ENCODE measurements at regions of chr1 and their contacts with region 1.

Region 1: DNA sequence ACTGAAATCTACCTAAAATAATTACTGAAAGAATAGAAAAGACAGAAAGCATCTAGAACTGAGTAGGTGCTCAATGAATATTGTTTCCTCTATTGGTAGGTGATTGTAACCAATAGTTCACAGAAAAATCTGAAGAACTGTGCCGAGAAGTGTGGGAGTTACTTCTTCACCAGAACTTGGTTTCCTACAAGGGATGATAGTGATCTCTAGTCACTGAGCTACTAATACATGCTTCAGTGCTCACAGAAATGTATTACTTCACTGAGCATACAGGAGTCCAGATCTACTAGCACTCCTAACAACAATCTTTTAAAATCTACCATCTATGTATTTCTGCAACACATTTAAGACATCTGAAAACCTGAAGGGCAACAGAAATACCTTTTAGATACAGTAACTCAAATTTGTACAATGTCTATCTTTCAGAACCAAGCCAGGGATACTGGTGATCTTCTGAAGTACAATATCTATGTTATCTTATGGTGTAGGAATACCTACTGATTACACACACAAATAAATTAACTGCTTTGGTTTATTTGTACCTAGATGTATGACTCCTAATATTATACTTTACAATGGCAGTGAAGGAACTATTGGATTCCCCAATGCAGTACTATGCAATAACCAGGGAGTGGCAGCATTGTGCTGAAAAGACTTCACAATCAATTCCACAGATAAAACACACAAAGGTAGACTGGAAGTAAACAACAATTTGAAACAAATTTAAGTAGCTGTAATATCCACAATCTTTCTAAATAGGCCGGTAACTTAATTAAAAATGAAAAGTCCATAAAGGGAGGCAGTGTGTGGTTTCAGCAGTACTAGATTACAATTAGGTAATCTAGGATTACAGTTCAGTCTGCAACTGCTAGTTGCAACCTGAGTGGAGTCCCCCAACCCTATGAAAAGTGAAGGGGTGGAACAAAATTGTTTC is 243.0 kb downstream of the SLC45A1 start:
- DNase-seq: peak; percentile 64
- H3K4me3 ChIP-seq: no peak overlapping the region
- H3K27ac ChIP-seq: no peak overlapping the region
- H3K4me1 ChIP-seq: peaks cover 2% of the 10 kb centered on the region
- H3K27me3 ChIP-seq: no peaks in the 10 kb centered on the region
- CTCF ChIP-seq: peak; percentile 58 to 66
- POLR2A ChIP-seq: no peak

Region 2: DNA sequence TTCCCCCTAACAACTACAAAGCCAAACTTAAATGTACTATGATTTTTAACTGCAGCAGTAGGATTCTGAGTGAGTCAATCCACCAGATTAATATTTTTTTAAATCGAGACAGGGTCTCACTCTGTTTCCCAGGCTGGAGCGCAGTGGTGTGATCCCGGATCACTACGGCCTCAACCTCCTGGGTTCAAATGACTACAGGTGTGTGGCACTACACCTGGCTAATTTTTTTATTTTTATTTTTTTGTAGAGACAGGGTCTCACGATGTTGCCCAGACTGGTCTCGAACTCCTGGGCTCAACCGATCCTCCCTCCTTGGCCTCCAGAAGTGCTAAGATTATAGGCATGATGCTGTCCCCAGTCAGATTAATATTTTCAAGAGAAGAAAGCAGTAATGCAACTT is 154.9 kb before region 1 on chr1:
- CTCF ChIA-PET with region 1: no interaction called
- POLR2A ChIA-PET with region 1: no interaction called
- dilution Hi-C with region 1: no loop called
- intact Hi-C with region 1: no loop called
- DNase-seq: no peak
- H3K4me3 ChIP-seq: no peak overlapping the region
- H3K27ac ChIP-seq: no peak overlapping the region
- H3K4me1 ChIP-seq: peaks cover 28% of the 10 kb centered on the region
- H3K27me3 ChIP-seq: no peaks in the 10 kb centered on the region
- CTCF ChIP-seq: no peak
- POLR2A ChIP-seq: no peak

Region 3: DNA sequence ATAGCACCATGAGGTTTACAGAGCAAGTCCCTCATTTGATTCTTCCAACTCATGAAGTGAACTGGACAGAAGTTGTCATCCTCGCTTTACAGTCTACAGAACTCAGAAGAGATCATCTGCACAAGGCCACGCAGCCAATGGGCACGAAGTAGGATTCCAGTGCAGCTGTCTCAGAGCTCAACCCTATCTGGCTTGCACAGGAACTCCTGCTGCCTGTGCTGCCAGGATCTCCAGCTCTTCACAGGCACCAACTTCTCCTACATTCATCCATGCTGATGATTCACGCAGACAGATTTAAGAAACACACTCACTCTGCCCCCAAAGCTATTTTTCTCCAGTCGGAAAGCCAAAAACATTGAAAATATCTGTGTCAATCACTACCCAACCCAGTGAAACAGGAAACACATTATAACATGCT is 99.5 kb after region 1 on chr1:
- CTCF ChIA-PET with region 1: interaction called, 15 read pairs
- POLR2A ChIA-PET with region 1: no interaction called
- dilution Hi-C with region 1: no loop called
- intact Hi-C with region 1: no loop called
- DNase-seq: peak; percentile 92
- H3K4me3 ChIP-seq: no peak overlapping the region
- H3K27ac ChIP-seq: peak overlapping the region; percentile 70
- H3K4me1 ChIP-seq: peaks cover 34% of the 10 kb centered on the region
- H3K27me3 ChIP-seq: no peaks in the 10 kb centered on the region
- CTCF ChIP-seq: no peak
- POLR2A ChIP-seq: no peak

Region 4: DNA sequence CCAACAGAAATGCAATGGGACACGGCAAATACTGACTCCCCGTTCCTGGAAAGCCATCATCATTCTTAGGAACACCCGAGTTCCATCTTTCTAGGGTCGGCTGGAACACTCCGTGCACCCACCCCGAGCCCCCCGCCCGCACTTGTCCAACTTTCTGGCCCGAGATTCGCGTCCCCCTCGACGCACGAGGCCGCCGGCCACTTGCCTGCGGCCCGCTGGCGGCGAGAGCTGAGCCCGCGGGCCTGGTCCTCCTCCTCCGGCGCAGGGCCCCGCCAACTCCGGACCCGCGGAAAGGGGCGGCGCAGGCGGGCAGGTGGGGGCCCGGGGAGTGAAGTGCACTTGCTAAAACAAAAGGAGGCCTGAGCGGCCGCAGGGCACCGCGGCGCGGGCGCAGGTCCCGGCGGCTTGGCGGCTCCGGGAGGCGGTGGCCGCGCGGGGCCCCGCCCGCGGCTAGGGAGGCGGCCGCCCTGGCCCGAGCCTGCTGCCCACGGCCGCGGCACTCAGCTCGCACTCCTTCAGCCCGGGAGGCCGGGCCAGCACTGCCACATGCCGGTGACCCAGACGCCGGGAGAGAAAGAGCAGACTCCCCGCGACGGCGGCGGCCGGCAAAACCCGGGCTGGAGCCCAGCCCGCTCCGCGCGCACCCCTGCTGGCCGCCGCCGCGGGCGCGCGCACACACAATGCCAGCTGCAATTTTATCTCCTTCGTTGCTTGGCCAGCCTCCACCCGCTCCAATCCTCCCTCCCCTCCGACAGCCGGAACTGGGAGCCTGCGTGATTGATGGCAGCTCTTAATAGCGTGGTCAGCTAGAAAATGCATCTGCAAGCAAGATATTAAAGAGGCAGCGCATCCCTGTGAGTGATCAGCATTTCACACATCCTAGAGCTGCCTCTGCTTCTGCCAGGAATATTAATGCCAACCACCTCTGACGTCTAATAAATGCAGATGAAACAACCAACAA is 142.3 kb after region 1 on chr1:
- CTCF ChIA-PET with region 1: interaction called, 12 read pairs
- POLR2A ChIA-PET with region 1: no interaction called
- dilution Hi-C with region 1: no loop called
- intact Hi-C with region 1: no loop called
- DNase-seq: peak; percentile 96
- H3K4me3 ChIP-seq: peak overlapping the region; percentile 61 to 94 (median 80)
- H3K27ac ChIP-seq: peak overlapping the region; percentile 77
- H3K4me1 ChIP-seq: peaks cover 17% of the 10 kb centered on the region
- H3K27me3 ChIP-seq: no peaks in the 10 kb centered on the region
- CTCF ChIP-seq: peak in 1 of 2 donors; percentile 20
- POLR2A ChIP-seq: peak; percentile 95

Region 5: GRCh38 chr1:8718850-8719361 is 158.0 kb after region 1 on chr1:
- CTCF ChIA-PET with region 1: interaction called, 14 read pairs
- POLR2A ChIA-PET with region 1: no interaction called
- dilution Hi-C with region 1: no loop called
- intact Hi-C with region 1: no loop called
- DNase-seq: peak; percentile 16
- H3K4me3 ChIP-seq: no peak overlapping the region
- H3K27ac ChIP-seq: no peak overlapping the region
- H3K4me1 ChIP-seq: peaks cover under 1% of the 10 kb centered on the region
- H3K27me3 ChIP-seq: no peaks in the 10 kb centered on the region
- CTCF ChIP-seq: peak in 1 of 2 donors; percentile 20
- POLR2A ChIP-seq: no peak